HAP-1 (cell line): ENCODE measurements at regions of chr20 and their contacts with region 1.

Region 1: GRCh38 chr20:31822421-31823330 is 3.5 kb downstream of the MYLK2 start:
- DNase-seq: peak; percentile 65 to 89
- H3K4me3 ChIP-seq: peak overlapping the region; percentile 1; the same call in 1 of the 2 replicates
- H3K4me1 ChIP-seq: peaks cover 2% of the 10 kb centered on the region; the same call in 1 of the 2 replicates
- H3K27me3 ChIP-seq: no peaks in the 10 kb centered on the region

Region 2: DNA sequence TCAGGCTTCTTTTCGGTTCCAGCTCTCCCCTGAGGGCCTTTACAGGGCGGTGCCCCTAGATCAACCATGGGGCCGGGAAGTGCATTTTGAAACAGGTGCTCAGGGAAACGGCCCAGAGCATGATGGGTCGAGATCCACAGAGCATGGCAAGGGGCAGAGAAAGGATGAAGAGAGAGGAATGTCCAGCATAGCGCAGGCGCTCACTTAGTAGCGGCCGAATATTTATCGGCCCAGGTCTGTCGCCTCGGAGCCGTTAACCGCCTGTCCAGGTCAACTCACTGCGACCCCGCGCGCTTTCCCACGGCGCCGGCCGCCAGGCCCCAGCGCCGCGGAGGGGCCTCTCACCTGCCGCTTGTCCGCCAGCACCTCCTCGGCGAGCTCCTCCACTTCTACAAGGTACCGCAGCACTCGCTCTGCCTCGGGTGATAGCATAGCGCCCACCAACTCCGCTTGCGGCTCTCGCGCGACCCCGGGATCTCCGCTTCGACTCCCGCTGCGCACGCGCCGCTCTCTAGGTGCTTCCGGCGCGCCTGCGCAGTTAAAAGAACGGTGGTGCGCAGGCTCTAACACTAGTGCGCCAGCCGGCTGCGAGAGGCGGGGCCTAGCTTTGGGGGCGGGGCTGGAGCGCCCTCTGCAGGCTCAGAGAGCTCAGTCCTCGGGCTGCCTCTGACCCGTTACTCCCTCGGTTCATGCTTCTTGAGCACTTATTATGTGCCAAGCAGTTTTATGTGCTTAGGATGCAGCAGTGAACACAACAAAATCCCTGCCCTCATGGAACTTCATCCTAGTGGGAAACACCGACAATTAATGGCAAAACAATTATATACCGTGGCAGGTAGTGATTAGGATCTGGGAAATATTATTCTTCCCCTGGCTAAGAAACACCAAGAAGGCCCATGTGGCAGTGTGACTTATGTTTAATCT is 129.1 kb after region 1 on chr20 and contains the start of gene PDRG1:
- in situ Hi-C with region 1: loop called (anchors 10 kb)
- DNase-seq: peak; percentile 94 to 97
- H3K4me3 ChIP-seq: peak within 1 kb of the TSS; percentile 89
- H3K4me1 ChIP-seq: no peaks in the 10 kb centered on the region; the same call in 1 of the 2 replicates
- H3K27me3 ChIP-seq: peaks cover 9% of the 10 kb centered on the region

Region 3: GRCh38 chr20:32091888-32092346 is 269.2 kb after region 1 on chr20:
- in situ Hi-C with region 1: loop called (anchors 5 kb)
- DNase-seq: peak; percentile 85 to 93
- H3K4me3 ChIP-seq: no peak overlapping the region
- H3K4me1 ChIP-seq: peaks cover 8% of the 10 kb centered on the region
- H3K27me3 ChIP-seq: no peaks in the 10 kb centered on the region

Region 4: GRCh38 chr20:32652739-32653526 is 830.3 kb after region 1 on chr20:
- in situ Hi-C with region 1: loop called (anchors 10 kb)
- DNase-seq: peak; percentile 61 to 91
- H3K4me3 ChIP-seq: no peak overlapping the region
- H3K4me1 ChIP-seq: no peaks in the 10 kb centered on the region
- H3K27me3 ChIP-seq: no peaks in the 10 kb centered on the region